A673 (cell line): ENCODE measurements at regions of chr4 and their contacts with region 1.

Region 1: DNA sequence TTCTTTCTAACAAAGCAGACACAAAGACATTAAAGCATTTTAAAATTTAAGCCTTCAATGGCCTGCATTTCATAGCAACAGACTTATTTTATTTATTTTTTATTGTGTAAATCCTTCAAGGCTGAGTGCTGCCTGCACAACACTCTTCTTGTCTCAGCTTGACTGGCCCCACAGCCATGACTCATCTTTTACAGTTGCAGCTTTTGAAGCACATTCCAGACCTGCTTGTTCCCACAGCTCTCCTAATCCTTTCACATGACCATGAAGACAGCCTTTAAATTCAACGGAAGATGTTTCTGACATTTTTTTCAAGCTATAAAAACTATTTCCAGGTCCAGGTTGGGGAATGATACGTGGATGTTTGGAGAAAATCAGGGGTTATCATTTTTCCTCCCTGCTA is 276.9 kb upstream of the TACR3 start:
- DNase-seq: peak; percentile 88
- H3K4me3 ChIP-seq: peak overlapping the region; percentile 7
- H3K27ac ChIP-seq: peak overlapping the region; percentile 49
- H3K4me1 ChIP-seq: peaks cover 13% of the 10 kb centered on the region
- H3K27me3 ChIP-seq: no peaks in the 10 kb centered on the region
- CTCF ChIP-seq: no peak

Region 2: DNA sequence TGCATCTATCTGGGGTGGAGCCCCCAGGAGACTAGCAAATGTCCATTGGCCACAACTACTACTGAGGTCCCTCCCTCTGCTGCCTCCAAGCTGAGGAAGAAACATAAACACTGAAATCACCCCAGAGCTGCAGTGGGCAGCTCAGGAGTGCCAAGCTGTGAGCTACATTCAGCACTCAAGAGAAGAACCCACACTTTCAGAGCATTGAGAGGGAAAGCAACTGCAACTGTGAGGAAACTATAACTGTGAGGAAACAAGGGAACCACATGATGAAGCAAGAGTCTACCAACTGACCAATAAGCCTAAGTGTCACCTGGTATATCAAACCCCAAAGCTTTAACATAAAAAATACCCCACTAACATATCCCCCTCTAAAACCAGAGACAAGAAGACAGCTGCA is 96.6 kb after region 1 on chr4:
- CTCF ChIA-PET with region 1: no interaction called
- POLR2A ChIA-PET with region 1: no interaction called
- intact Hi-C with region 1: no loop called
- DNase-seq: no peak
- H3K4me3 ChIP-seq: no peak overlapping the region
- H3K27ac ChIP-seq: no peak overlapping the region
- H3K4me1 ChIP-seq: no peaks in the 10 kb centered on the region
- H3K27me3 ChIP-seq: no peaks in the 10 kb centered on the region
- CTCF ChIP-seq: no peak

Region 3: DNA sequence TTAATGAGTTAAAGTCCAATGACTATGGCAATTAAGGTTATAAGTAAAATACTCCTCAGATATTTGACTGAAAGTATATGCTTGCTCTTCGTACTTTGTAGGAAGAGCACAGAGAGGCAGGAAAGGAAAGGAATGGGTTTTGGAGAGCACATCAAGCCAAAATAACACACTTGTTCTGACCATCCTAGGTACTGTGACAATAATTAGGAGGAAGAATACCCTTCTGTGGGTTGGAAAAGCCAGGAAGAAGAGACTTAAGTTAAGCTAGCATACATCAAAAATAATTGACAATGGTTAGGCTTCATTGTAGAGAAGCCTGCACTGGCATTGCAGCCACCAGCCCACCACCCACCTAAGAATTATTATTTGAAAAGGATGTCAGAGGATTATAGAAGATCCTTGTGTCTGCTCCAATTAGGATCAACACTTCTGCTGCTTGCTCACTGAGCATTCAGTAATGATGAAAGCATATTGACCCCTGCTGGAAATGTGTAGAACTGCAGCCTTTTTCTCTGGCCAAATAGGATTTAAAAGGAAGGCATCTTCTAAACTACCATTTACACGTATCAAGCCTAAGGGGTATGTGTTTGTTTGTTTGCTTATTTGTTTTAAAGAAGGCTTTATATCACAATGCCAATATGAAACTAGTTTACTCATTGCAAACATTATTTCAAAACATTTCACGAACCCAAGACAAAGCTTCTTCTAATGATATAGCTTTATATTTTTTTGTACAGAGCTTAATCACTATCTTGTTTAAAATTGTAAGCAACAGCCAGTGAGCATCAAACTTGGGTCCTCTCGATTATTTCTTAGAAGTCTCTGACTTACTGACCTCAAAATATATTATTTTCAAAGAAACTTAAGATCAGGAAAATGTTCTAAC is 863.8 kb after region 1 on chr4:
- CTCF ChIA-PET with region 1: no interaction called
- POLR2A ChIA-PET with region 1: no interaction called
- intact Hi-C with region 1: loop called (anchors 1 kb)
- DNase-seq: peak; percentile 85
- H3K4me3 ChIP-seq: no peak overlapping the region
- H3K27ac ChIP-seq: no peak overlapping the region
- H3K4me1 ChIP-seq: no peaks in the 10 kb centered on the region
- H3K27me3 ChIP-seq: peaks cover 6% of the 10 kb centered on the region
- CTCF ChIP-seq: peak; percentile 88

Region 4: DNA sequence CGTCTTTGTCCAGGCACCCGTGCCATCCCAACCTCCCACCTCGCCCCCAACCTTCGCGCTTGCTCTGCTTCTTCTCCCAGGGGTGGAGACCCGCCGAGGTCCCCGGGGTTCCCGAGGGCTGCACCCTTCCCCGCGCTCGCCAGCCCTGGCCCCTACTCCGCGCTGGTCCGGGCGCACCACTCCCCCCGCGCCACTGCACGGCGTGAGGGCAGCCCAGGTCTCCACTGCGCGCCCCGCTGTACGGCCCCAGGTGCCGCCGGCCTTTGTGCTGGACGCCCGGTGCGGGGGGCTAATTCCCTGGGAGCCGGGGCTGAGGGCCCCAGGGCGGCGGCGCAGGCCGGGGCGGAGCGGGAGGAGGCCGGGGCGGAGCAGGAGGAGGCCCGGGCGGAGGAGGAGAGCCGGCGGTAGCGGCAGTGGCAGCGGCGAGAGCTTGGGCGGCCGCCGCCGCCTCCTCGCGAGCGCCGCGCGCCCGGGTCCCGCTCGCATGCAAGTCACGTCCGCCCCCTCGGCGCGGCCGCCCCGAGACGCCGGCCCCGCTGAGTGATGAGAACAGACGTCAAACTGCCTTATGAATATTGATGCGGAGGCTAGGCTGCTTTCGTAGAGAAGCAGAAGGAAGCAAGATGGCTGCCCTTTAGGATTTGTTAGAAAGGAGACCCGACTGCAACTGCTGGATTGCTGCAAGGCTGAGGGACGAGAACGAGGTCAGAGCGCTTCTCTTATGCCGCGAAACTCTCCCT is 1149.8 kb after region 1 on chr4 and contains the start of gene TET2:
- CTCF ChIA-PET with region 1: no interaction called
- POLR2A ChIA-PET with region 1: no interaction called
- intact Hi-C with region 1: loop called (anchors 5 kb)
- DNase-seq: peak; percentile 97
- H3K4me3 ChIP-seq: peak within 1 kb of the TSS; percentile 88
- H3K27ac ChIP-seq: peak within 1 kb of the TSS; percentile 98
- H3K4me1 ChIP-seq: peaks cover 17% of the 10 kb centered on the region
- H3K27me3 ChIP-seq: no peaks in the 10 kb centered on the region
- CTCF ChIP-seq: no peak
- total RNA-seq, gene TET2: 22.8 and 25.7 TPM in 2 replicates

Region 5: GRCh38 chr4:105471566-105472176 is 1475.0 kb after region 1 on chr4:
- CTCF ChIA-PET with region 1: no interaction called
- POLR2A ChIA-PET with region 1: no interaction called
- intact Hi-C with region 1: loop called (anchors 2 kb)
- DNase-seq: peak; percentile 86
- H3K4me3 ChIP-seq: peak overlapping the region; percentile 90
- H3K27ac ChIP-seq: peak overlapping the region; percentile 96
- H3K4me1 ChIP-seq: peaks cover 18% of the 10 kb centered on the region
- H3K27me3 ChIP-seq: no peaks in the 10 kb centered on the region
- CTCF ChIP-seq: peak; percentile 78

Region 6: DNA sequence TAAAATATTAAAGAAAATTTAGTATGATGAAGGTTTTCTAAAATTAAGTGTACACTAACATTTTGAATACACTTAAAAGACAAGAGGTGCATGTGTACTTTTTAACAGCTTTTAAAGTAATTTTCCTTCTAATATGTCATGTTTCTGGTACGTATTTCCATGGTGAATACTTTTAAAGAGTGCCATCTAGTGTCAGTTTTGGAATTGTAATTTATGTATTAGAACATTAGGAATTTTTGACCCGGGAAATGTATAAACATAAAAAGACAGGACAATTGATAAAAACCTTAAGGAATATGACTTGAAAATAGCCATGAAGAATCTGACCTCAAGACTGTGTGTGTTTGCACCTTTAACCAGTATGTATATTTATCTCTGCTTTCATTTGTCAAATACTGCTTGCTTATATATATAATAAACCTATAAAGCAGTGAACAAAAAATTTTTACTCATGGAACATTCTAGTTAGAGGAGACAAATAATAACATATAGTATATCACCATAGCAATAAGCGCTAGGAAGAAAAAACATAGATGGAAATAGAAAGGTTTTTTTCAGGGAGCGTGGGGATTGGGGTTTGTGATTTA is 1719.1 kb after region 1 on chr4:
- CTCF ChIA-PET with region 1: interaction called, 3 read pairs
- POLR2A ChIA-PET with region 1: no interaction called
- intact Hi-C with region 1: loop called (anchors 5 kb)
- DNase-seq: peak; percentile 74
- H3K4me3 ChIP-seq: no peak overlapping the region
- H3K27ac ChIP-seq: no peak overlapping the region
- H3K4me1 ChIP-seq: peaks cover 31% of the 10 kb centered on the region
- H3K27me3 ChIP-seq: no peaks in the 10 kb centered on the region
- CTCF ChIP-seq: peak; percentile 64